Left lung (tissue), 14 donors: ENCODE measurements at regions of chr10 and their contacts with region 1.

Region 1: GRCh38 chr10:15369256-15370211 is 1.6 kb downstream of the FAM171A1 start:
- DNase-seq: peak in 1 of 4 donors; percentile 24
- ATAC-seq: peak; percentile 12
- H3K4me3 ChIP-seq: peak overlapping the region; percentile 46 to 50
- H3K27ac ChIP-seq: no peak overlapping the region
- H3K4me1 ChIP-seq: peaks cover 0 to 14% of the 10 kb centered on the region in 2 donors
- H3K27me3 ChIP-seq: peaks cover 0 to 74% of the 10 kb centered on the region in 2 donors
- CTCF ChIP-seq: no peak

Region 2: DNA sequence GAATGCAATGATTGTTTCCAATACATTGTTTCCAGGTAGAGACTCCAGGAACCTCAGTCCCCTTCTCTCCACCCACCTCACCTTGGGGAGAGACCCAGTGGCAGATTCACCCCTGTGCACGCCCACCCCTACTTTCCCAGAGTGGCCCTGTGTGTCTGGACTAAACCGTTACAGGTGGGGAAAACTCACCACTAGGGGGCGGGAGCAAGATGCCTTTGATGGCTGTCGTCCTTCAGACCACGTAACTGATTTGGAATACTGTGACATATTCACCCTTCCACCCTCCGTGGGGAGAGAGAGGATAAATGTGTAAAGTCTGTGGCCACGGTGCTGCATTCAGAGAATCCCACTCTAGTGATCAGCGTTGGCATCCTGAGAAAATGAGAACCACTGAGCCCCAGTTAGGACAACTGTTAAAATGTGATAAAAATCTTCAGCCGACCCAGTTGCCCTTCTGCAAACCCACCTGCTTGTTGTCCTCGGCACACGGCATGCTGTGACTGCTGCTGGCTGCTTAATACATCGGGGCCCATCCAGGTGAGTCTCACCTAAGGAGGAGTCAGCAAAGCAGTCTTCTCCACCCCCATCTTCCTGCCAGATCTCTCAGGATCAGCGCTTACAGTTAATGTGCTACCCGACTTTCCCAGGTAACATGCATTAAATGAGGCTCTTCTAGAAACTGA is 159.6 kb before region 1 on chr10:
- intact Hi-C with region 1: loop called in 1 of 2 experiments (anchors 10 kb)
- DNase-seq: peak in 3 of 4 donors; percentile 59 to 81 (median 68)
- ATAC-seq: peak; percentile 85
- H3K4me3 ChIP-seq: no peak overlapping the region
- H3K27ac ChIP-seq: no peak overlapping the region
- H3K4me1 ChIP-seq: no peaks in the 10 kb centered on the region
- H3K27me3 ChIP-seq: no peaks in the 10 kb centered on the region
- CTCF ChIP-seq: peak; percentile 76 to 81